Dendritic cell treated with granulocyte-macrophage colony-stimulating factor and Interleukin-4, amounts not matched to agents 40 ng/mL and 50 ng/mL, for 4 days (primary cell): ENCODE measurements at regions of chr7 and their contacts with region 1.

Region 1: DNA sequence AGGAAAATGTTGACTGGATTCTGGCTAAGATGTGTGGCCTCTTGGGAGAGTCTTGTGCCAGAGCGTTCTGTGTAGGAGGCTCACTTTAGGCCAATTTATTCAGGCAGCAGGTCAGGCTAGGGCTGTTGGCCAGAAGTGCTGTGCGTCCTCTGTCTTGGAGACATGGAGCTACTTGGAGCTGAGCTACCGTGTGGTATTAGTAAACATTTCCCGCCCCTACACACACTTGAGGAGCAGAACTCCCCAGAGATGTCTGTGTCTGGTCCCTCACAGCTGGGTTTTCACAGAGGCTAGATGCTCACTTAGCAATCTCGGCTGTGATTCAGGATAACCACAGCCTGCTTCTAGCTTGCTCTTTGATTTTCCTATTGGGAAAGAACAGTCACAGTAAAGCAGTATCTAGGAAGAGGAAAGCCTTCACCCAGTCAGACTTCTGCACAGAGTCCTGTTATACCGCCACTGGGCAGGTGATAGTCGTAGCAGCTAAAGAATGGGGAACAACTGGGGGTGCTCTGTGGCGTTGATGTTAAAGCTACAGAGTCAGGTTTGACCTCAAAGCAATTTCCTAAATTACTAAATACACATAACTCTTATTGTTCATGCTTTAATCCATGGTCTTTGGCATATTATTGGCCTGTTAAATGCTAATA is 86.7 kb downstream of the MDFIC start:
- H3K4me3 Mint-ChIP-seq: no peak overlapping the region
- H3K27ac Mint-ChIP-seq: no peak overlapping the region
- H3K4me1 Mint-ChIP-seq: peaks cover 36% of the 10 kb centered on the region
- H3K27me3 Mint-ChIP-seq: no peaks in the 10 kb centered on the region

Region 2: DNA sequence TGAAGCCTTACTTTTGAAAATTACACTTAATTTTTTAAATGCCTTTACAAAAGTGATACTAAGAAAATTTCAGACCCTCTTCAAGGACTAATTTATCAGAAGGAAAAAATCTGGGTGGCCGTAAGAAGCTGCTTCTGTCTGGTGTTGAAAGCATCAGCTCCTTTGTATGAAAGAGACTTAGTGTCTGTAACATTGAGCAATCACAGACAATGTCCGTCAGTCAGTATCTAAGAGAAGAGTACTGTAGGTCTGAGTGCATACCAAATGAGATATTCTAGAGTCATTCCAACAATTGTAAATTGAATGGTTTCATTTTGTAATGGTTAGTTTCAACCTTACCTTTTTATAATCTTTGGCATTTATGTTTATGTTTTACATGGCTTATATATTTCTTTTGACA is 97.8 kb before region 1 on chr7:
- intact Hi-C with region 1: loop called (anchors 5 kb)
- H3K4me3 Mint-ChIP-seq: no peak overlapping the region
- H3K27ac Mint-ChIP-seq: no peak overlapping the region
- H3K4me1 Mint-ChIP-seq: no peaks in the 10 kb centered on the region
- H3K27me3 Mint-ChIP-seq: no peaks in the 10 kb centered on the region

Region 3: GRCh38 chr7:115178835-115179234 is 170.2 kb after region 1 on chr7:
- intact Hi-C with region 1: no loop called
- H3K4me3 Mint-ChIP-seq: no peak overlapping the region
- H3K27ac Mint-ChIP-seq: no peak overlapping the region
- H3K4me1 Mint-ChIP-seq: peaks cover 6% of the 10 kb centered on the region
- H3K27me3 Mint-ChIP-seq: no peaks in the 10 kb centered on the region